OCI-LY7 (cell line): ENCODE measurements at regions of chr3 and their contacts with region 1.

Region 1: DNA sequence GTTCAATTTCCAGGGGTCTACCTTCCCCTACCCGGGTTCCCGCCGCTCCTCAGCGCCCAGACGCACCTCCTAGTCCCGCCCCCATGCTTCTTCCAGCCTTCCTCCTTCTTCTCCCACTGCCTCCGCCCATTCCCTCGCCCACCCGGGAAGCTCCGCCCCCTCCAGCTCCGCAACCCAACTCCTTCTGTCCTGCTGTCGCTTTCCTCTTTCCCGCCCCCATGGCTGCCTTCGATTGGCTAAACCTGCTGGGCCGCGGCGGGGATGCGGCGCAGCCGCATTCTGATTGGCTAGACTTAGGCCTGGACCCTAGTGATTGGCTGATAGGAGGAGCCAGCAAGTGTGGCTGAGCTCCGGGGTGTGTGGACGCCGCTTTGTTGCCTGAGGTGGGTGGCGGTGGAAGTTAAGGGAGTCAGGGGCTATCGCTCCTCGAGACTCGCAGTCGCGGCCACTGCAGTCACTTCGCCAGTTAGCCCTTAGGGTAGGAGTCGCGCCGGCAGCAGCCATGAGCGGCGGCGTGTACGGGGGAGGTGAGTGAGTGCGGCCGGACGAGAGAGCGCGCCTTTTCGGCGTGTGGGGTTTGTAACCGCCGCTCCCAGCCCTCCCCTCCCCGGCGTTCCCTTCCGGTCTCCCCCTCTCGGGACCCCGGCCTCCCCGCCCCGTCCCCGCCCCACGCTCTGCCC is at the start of gene ACTL6A:
- DNase-seq: peak; percentile 99
- H3K4me3 ChIP-seq: peak within 1 kb of the TSS; percentile 90
- H3K27ac ChIP-seq: peak within 1 kb of the TSS; percentile 76
- H3K4me1 ChIP-seq: peaks cover 39% of the 10 kb centered on the region
- CTCF ChIP-seq: no peak
- total RNA-seq, gene ACTL6A: 92.9 and 127 TPM in 2 replicates

Region 2: GRCh38 chr3:179071550-179072397 is 491.0 kb before region 1 on chr3 and contains the start of gene ZMAT3:
- CTCF ChIA-PET with region 1: no interaction called
- POLR2A ChIA-PET with region 1: interaction called, 5 read pairs
- intact Hi-C with region 1: loop called (anchors 5 kb)
- DNase-seq: peak; percentile 82
- H3K4me3 ChIP-seq: peak within 1 kb of the TSS; percentile 92
- H3K27ac ChIP-seq: peak within 1 kb of the TSS; percentile 73
- H3K4me1 ChIP-seq: peaks cover 40% of the 10 kb centered on the region
- CTCF ChIP-seq: no peak
- total RNA-seq, gene ZMAT3: 3.7 TPM in 2 replicates

Region 3: GRCh38 chr3:179174316-179174715 is 388.4 kb before region 1 on chr3:
- CTCF ChIA-PET with region 1: no interaction called
- POLR2A ChIA-PET with region 1: no interaction called
- intact Hi-C with region 1: no loop called
- DNase-seq: peak; percentile 32
- H3K4me3 ChIP-seq: peak overlapping the region; percentile 31
- H3K27ac ChIP-seq: peak overlapping the region; percentile 24
- H3K4me1 ChIP-seq: peaks cover 26% of the 10 kb centered on the region
- CTCF ChIP-seq: no peak

Region 4: GRCh38 chr3:179347345-179348194 is 215.2 kb before region 1 on chr3 and contains the start of gene MFN1:
- CTCF ChIA-PET with region 1: no interaction called
- POLR2A ChIA-PET with region 1: interaction called, 5 read pairs
- intact Hi-C with region 1: loop called (anchors 1 kb)
- DNase-seq: peak; percentile 93
- H3K4me3 ChIP-seq: peak within 1 kb of the TSS; percentile 76
- H3K27ac ChIP-seq: peak within 1 kb of the TSS; percentile 67
- H3K4me1 ChIP-seq: peaks cover 26% of the 10 kb centered on the region
- CTCF ChIP-seq: no peak
- total RNA-seq, gene MFN1: 23.0 and 31.7 TPM in 2 replicates

Region 5: DNA sequence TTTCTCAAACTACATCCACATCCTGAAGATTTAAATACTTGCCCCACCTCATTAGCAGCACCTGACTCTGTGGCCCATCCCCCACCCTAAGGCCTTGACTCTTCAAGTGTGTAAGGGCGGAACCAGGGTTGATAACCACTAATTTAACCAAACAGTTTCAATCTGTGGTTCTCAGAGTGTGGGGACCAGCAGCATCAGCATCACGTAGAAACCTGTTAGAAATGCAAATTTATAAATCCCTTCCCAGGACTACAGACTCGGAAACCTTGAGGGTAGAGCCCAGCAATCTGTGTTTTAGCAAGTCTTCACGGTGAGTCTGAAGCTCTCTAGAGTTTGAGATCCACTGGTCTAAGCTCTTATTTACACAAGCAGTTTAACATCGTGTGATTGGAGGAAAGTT is 123.9 kb before region 1 on chr3:
- CTCF ChIA-PET with region 1: no interaction called
- POLR2A ChIA-PET with region 1: interaction called, 9 read pairs
- intact Hi-C with region 1: loop called (anchors 2 kb)
- DNase-seq: peak; percentile 94
- H3K4me3 ChIP-seq: peak overlapping the region; percentile 41
- H3K27ac ChIP-seq: peak overlapping the region; percentile 72
- H3K4me1 ChIP-seq: peaks cover 27% of the 10 kb centered on the region
- CTCF ChIP-seq: no peak

Region 6: GRCh38 chr3:179551349-179552105 is 11.2 kb before region 1 on chr3:
- CTCF ChIA-PET with region 1: no interaction called
- POLR2A ChIA-PET with region 1: interaction called, 15 read pairs
- intact Hi-C with region 1: no loop called
- DNase-seq: no peak
- H3K4me3 ChIP-seq: no peak overlapping the region
- H3K27ac ChIP-seq: no peak overlapping the region
- H3K4me1 ChIP-seq: peaks cover 3% of the 10 kb centered on the region
- CTCF ChIP-seq: no peak